Naive thymus-derived CD4-positive, alpha-beta T cell (primary cell): ENCODE measurements at regions of chr11 and their contacts with region 1.

Region 1: GRCh38 chr11:110296226-110297075 is at the start of gene RDX:
- DNase-seq: peak; percentile 26 to 74 (median 44)
- ATAC-seq: peak; percentile 86
- H3K4me3 ChIP-seq: peak within 1 kb of the TSS; percentile 69
- H3K4me3 Mint-ChIP-seq: peak within 1 kb of the TSS; percentile 87 to 93 (median 92)
- H3K27ac ChIP-seq: peak within 1 kb of the TSS; percentile 61
- H3K27ac Mint-ChIP-seq: peak within 1 kb of the TSS; percentile 5 to 89 (median 65)
- H3K4me1 ChIP-seq: peaks cover 0 to 6% of the 10 kb centered on the region in 2 donors
- H3K4me1 Mint-ChIP-seq: peaks cover 2 to 44% (median 32%) of the 10 kb centered on the region in 7 donors
- H3K27me3 ChIP-seq: no peaks in the 10 kb centered on the region
- H3K27me3 Mint-ChIP-seq: no peaks in the 10 kb centered on the region
- total RNA-seq, gene RDX: 14.0 to 63.6 (median 17.0) TPM

Region 2: GRCh38 chr11:110199184-110199941 is 97.1 kb before region 1 on chr11:
- CTCF ChIA-PET with region 1: no interaction called
- POLR2A ChIA-PET with region 1: no interaction called
- intact Hi-C with region 1: loop called (anchors 5 kb)
- DNase-seq: no peak
- ATAC-seq: no peak
- H3K4me3 ChIP-seq: no peak overlapping the region
- H3K4me3 Mint-ChIP-seq: no peak overlapping the region
- H3K27ac ChIP-seq: no peak overlapping the region
- H3K27ac Mint-ChIP-seq: no peak overlapping the region
- H3K4me1 ChIP-seq: no peaks in the 10 kb centered on the region
- H3K4me1 Mint-ChIP-seq: peaks cover 0 to 4% (median 0%) of the 10 kb centered on the region in 7 donors
- H3K27me3 ChIP-seq: no peaks in the 10 kb centered on the region
- H3K27me3 Mint-ChIP-seq: peaks cover 0 to 9% (median 2%) of the 10 kb centered on the region in 5 donors

Region 3: GRCh38 chr11:110251837-110252236 is 44.6 kb before region 1 on chr11:
- CTCF ChIA-PET with region 1: no interaction called
- POLR2A ChIA-PET with region 1: no interaction called
- intact Hi-C with region 1: loop called in 1 of 2 experiments (anchors 5 kb)
- DNase-seq: no peak
- ATAC-seq: no peak
- H3K4me3 ChIP-seq: no peak overlapping the region
- H3K4me3 Mint-ChIP-seq: no peak overlapping the region
- H3K27ac ChIP-seq: no peak overlapping the region
- H3K27ac Mint-ChIP-seq: no peak overlapping the region
- H3K4me1 ChIP-seq: no peaks in the 10 kb centered on the region
- H3K4me1 Mint-ChIP-seq: peaks cover 0 to 12% (median 0%) of the 10 kb centered on the region in 7 donors
- H3K27me3 ChIP-seq: no peaks in the 10 kb centered on the region
- H3K27me3 Mint-ChIP-seq: no peaks in the 10 kb centered on the region

Region 4: DNA sequence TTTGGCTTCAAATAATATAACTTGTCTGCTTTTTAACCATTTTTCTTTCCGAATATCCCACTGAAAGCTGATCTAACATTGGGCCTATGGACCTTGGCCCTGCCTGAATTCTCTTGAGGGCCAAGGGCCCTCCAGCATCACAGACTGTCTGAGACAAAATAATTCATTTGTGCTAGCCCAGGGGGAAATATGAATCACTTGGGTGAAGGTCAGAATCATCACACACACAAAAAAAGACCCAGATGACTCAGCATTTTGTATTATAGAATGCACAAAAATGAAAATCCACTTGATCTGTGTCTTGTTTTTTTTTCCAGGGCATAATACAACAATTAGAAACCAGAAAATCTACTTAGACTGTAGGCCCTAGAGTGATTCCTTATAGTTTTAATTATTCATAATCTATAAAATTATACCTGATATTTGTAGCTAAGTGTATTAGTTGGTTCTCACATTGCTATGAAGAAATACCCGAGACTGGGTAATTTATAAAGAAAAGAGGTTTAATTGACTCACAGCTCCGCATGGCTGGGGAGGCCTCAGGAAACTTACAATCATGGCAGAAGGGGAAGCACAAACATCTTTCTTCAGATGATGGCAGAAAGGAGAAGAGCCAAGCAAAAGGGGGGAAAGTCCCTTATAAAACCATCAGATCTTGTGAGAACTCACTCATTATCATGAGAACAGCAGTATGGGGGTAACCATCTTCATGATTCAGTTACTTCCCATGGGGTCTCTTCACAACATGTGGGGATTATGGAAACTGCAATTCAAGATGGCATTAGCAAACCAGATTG is 15.5 kb after region 1 on chr11:
- CTCF ChIA-PET with region 1: no interaction called
- POLR2A ChIA-PET with region 1: no interaction called
- intact Hi-C with region 1: no loop called
- DNase-seq: no peak
- ATAC-seq: peak; percentile 31
- H3K4me3 ChIP-seq: no peak overlapping the region
- H3K4me3 Mint-ChIP-seq: no peak overlapping the region
- H3K27ac ChIP-seq: no peak overlapping the region
- H3K27ac Mint-ChIP-seq: no peak overlapping the region
- H3K4me1 ChIP-seq: no peaks in the 10 kb centered on the region
- H3K4me1 Mint-ChIP-seq: peaks cover 0 to 7% (median 0%) of the 10 kb centered on the region in 7 donors
- H3K27me3 ChIP-seq: no peaks in the 10 kb centered on the region
- H3K27me3 Mint-ChIP-seq: no peaks in the 10 kb centered on the region

Region 5: DNA sequence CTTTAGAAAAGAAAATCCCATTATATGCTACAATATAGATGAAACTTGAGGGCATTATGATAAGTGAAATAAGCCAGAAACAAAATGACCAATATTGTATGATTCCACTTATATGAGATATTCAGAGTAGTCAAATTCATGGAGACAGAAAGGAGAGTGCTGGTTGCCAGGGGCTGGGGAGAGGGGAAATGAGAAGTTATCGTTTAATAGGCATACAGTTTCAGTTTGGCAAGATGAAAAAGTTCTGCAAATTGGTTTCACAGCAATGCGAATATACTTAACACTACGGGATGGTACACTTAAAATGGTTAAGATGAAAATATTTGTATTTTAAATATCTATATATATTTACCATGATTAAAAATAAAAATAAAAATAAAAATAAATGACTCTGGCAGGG is 31.1 kb after region 1 on chr11:
- CTCF ChIA-PET with region 1: no interaction called
- POLR2A ChIA-PET with region 1: no interaction called
- intact Hi-C with region 1: loop called in 1 of 2 experiments (anchors 2 kb)
- DNase-seq: no peak
- ATAC-seq: no peak
- H3K4me3 ChIP-seq: no peak overlapping the region
- H3K4me3 Mint-ChIP-seq: peak overlapping the region in 8 of 10 donors; percentile 1 to 98 (median 22)
- H3K27ac ChIP-seq: no peak overlapping the region
- H3K27ac Mint-ChIP-seq: peak overlapping the region in 1 of 9 donors; percentile 98
- H3K4me1 ChIP-seq: peaks cover 0 to 11% of the 10 kb centered on the region in 2 donors
- H3K4me1 Mint-ChIP-seq: peaks cover 0 to 33% (median 12%) of the 10 kb centered on the region in 7 donors
- H3K27me3 ChIP-seq: no peaks in the 10 kb centered on the region
- H3K27me3 Mint-ChIP-seq: peaks cover 0 to 18% (median 4%) of the 10 kb centered on the region in 5 donors

Region 6: GRCh38 chr11:110349138-110349996 is 52.9 kb after region 1 on chr11:
- CTCF ChIA-PET with region 1: no interaction called
- POLR2A ChIA-PET with region 1: no interaction called
- intact Hi-C with region 1: loop called in 1 of 2 experiments (anchors 1 kb)
- DNase-seq: peak in 1 of 9 donors; percentile 79
- ATAC-seq: peak; percentile 18
- H3K4me3 ChIP-seq: no peak overlapping the region
- H3K4me3 Mint-ChIP-seq: peak overlapping the region in 5 of 10 donors; percentile 3 to 69 (median 7)
- H3K27ac ChIP-seq: no peak overlapping the region
- H3K27ac Mint-ChIP-seq: peak overlapping the region in 6 of 9 donors; percentile 6 to 96 (median 38)
- H3K4me1 ChIP-seq: peaks cover 0 to 7% of the 10 kb centered on the region in 2 donors
- H3K4me1 Mint-ChIP-seq: peaks cover 13 to 49% (median 20%) of the 10 kb centered on the region in 7 donors
- H3K27me3 ChIP-seq: no peaks in the 10 kb centered on the region
- H3K27me3 Mint-ChIP-seq: no peaks in the 10 kb centered on the region

Region 7: DNA sequence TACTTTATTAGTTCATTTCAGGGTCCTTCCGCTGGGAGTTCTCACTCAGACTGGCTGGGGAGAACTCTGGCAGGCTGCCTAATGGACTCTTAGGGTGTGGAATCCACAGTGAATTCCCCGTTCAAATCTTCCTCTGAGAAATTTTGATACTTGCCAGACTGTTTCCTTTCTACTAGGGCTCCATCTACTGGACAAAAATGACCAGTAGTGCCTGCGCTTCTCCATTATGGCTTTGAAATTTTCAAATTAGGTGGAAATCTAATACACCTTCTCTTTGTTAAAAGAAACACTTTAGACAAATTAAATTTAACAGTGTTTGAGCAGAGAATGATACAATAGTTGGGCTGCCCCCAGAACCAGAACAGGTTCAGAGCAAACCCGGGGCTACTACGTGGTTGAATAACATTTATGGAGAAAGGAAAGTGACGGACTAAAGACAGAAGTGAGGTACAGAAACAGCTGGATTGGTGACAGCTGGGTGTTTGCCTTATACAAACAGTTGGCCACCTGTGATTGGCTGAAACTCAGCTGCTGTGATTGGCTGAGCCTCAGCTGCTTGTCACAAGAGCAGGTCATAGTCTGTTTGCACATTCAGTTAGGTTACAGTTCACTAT is 80.4 kb after region 1 on chr11:
- CTCF ChIA-PET with region 1: no interaction called
- POLR2A ChIA-PET with region 1: no interaction called
- intact Hi-C with region 1: loop called in 1 of 2 experiments (anchors 5 kb)
- DNase-seq: peak in 7 of 9 donors; percentile 13 to 45 (median 22)
- ATAC-seq: peak; percentile 68
- H3K4me3 ChIP-seq: no peak overlapping the region
- H3K4me3 Mint-ChIP-seq: no peak overlapping the region
- H3K27ac ChIP-seq: no peak overlapping the region
- H3K27ac Mint-ChIP-seq: no peak overlapping the region
- H3K4me1 ChIP-seq: no peaks in the 10 kb centered on the region
- H3K4me1 Mint-ChIP-seq: peaks cover 0 to 27% (median 5%) of the 10 kb centered on the region in 7 donors
- H3K27me3 ChIP-seq: no peaks in the 10 kb centered on the region
- H3K27me3 Mint-ChIP-seq: peaks cover 0 to 6% (median 4%) of the 10 kb centered on the region in 5 donors